CD14-positive monocyte (primary cell): ENCODE measurements at regions of chr15 and their contacts with region 1.

Region 1: DNA sequence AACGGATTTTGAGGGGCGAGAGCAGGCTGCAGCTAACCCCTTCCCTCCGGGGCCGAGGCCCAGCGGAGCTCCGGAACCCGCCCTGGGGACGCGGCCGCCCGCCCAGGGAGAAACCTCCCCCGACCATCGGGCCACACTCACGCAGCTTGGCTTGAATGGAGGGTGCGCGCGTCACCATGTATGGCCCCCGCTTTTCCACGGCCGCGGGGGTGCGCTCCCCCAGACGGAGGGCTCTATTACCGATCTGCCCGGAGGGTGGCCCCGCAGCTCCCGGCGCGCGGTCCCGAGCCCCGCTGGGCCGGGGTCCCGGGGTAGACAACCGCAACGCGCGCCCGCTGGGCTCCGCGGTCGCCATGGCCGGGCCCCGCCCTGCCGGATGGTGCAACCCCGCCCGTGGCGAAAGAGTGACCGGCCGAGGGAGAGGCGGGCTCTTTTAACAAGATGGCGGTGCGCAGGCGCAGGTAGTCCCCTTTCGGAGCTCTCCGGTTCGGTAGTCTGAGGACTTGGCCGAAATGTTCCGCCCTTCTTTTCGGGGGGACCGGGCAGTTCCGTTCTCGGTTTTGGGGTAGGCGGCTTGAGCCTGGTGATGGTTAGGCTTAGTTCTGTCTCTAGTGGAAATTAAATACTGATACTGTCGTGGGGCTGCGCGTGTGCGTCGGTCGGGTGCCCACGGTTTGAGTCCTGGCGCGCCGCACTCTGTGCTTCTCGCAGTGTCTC is at the start of gene FAM219B:
- DNase-seq: peak; percentile 82 to 95 (median 88)
- H3K4me3 ChIP-seq: peak within 1 kb of the TSS; percentile 62 to 95 (median 95)
- H3K4me3 Mint-ChIP-seq: peak within 1 kb of the TSS; percentile 96 to 97
- H3K27ac ChIP-seq: peak within 1 kb of the TSS; percentile 62 to 90
- H3K27ac Mint-ChIP-seq: peak within 1 kb of the TSS; percentile 92 to 96 (median 94)
- H3K4me1 ChIP-seq: peaks cover 29 to 34% of the 10 kb centered on the region in 2 donors
- H3K4me1 Mint-ChIP-seq: peaks cover 37% of the 10 kb centered on the region
- H3K27me3 ChIP-seq: no peaks in the 10 kb centered on the region
- H3K27me3 Mint-ChIP-seq: peaks cover 0 to 3% (median 0%) of the 10 kb centered on the region in 3 donors
- CTCF ChIP-seq: no peak
- polyA plus RNA-seq, gene FAM219B: 11.7 to 53.9 (median 17.1) TPM

Region 2: GRCh38 chr15:74842581-74843444 is 63.8 kb before region 1 on chr15 and contains the start of gene ULK3:
- intact Hi-C with region 1: loop called (anchors 10 kb)
- DNase-seq: peak; percentile 86 to 91 (median 89)
- H3K4me3 ChIP-seq: peak within 1 kb of the TSS; percentile 54 to 95 (median 64)
- H3K4me3 Mint-ChIP-seq: peak within 1 kb of the TSS; percentile 87 to 92
- H3K27ac ChIP-seq: peak within 1 kb of the TSS in 1 of 2 donors; percentile 78
- H3K27ac Mint-ChIP-seq: peak within 1 kb of the TSS; percentile 58 to 83 (median 78)
- H3K4me1 ChIP-seq: peaks cover 16 to 22% of the 10 kb centered on the region in 2 donors
- H3K4me1 Mint-ChIP-seq: peaks cover 37% of the 10 kb centered on the region
- H3K27me3 ChIP-seq: no peaks in the 10 kb centered on the region
- H3K27me3 Mint-ChIP-seq: peaks cover 0 to 3% (median 0%) of the 10 kb centered on the region in 3 donors
- CTCF ChIP-seq: peak; percentile 89
- polyA plus RNA-seq, gene ULK3: 9.4 to 58.7 (median 16.0) TPM

Region 3: GRCh38 chr15:74873036-74873755 is 33.4 kb before region 1 on chr15 and contains the start of gene SCAMP2:
- intact Hi-C with region 1: loop called in 1 of 2 experiments (anchors 5 kb)
- DNase-seq: peak; percentile 84 to 87 (median 85)
- H3K4me3 ChIP-seq: peak within 1 kb of the TSS; percentile 76 to 82 (median 77)
- H3K4me3 Mint-ChIP-seq: peak within 1 kb of the TSS; percentile 89 to 95
- H3K27ac ChIP-seq: peak within 1 kb of the TSS; percentile 83 to 98
- H3K27ac Mint-ChIP-seq: peak within 1 kb of the TSS; percentile 95 to 99 (median 98)
- H3K4me1 ChIP-seq: peaks cover 51 to 56% of the 10 kb centered on the region in 2 donors
- H3K4me1 Mint-ChIP-seq: peaks cover 50% of the 10 kb centered on the region
- H3K27me3 ChIP-seq: no peaks in the 10 kb centered on the region
- H3K27me3 Mint-ChIP-seq: peaks cover 1 to 4% (median 1%) of the 10 kb centered on the region in 3 donors
- CTCF ChIP-seq: no peak
- polyA plus RNA-seq, gene SCAMP2: 124 to 158 (median 124) TPM

Region 4: DNA sequence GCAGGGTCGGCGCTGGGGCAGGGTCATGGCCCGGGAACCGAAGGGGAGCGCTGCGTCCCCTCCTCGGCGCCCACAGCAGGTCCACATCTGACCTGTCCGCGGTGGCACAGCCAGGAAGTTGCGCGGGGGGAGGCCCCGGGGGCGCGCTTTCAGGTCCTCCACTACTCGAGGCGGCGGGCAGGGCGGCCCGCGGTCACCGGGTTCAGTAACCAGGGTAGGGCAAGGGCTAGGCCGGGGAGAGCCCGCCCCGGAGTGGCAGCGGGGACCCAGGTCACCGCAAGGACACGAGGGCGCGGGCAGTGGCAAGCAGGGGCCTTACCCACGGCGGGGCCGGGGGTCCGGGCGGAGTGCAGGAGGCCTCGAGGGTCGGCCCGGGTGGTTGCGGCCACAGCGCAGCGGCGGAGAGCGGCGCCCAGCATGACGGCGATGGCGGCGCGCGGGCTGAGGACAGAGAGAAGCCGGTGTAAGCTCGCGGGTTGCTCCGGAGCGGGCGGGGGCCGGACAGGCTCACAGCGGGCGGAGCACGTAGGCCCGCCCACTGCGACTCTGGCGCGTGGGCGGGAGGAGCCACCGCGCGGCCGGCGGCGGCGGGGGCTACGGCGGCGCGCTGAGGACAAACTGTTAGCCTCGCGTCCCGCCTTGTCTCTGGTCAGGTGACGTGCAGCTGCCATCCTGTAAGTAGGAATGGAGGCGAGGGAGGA is 31.1 kb after region 1 on chr15 and contains the start of gene COX5A:
- intact Hi-C with region 1: loop called in 1 of 2 experiments (anchors 2 kb)
- DNase-seq: peak; percentile 91 to 96 (median 94)
- H3K4me3 ChIP-seq: peak within 1 kb of the TSS; percentile 69 to 92 (median 81)
- H3K4me3 Mint-ChIP-seq: peak within 1 kb of the TSS; percentile 78 to 92
- H3K27ac ChIP-seq: peak within 1 kb of the TSS; percentile 77 to 88
- H3K27ac Mint-ChIP-seq: peak within 1 kb of the TSS; percentile 82 to 94 (median 91)
- H3K4me1 ChIP-seq: peaks cover 16 to 29% of the 10 kb centered on the region in 2 donors
- H3K4me1 Mint-ChIP-seq: peaks cover 26% of the 10 kb centered on the region
- H3K27me3 ChIP-seq: no peaks in the 10 kb centered on the region
- H3K27me3 Mint-ChIP-seq: peaks cover 0 to 1% (median 1%) of the 10 kb centered on the region in 3 donors
- CTCF ChIP-seq: no peak
- polyA plus RNA-seq, gene COX5A: 127 to 498 (median 434) TPM